Posterior vena cava (tissue), 2 donors: ENCODE measurements at regions of chr15 and their contacts with region 1.

Region 1: DNA sequence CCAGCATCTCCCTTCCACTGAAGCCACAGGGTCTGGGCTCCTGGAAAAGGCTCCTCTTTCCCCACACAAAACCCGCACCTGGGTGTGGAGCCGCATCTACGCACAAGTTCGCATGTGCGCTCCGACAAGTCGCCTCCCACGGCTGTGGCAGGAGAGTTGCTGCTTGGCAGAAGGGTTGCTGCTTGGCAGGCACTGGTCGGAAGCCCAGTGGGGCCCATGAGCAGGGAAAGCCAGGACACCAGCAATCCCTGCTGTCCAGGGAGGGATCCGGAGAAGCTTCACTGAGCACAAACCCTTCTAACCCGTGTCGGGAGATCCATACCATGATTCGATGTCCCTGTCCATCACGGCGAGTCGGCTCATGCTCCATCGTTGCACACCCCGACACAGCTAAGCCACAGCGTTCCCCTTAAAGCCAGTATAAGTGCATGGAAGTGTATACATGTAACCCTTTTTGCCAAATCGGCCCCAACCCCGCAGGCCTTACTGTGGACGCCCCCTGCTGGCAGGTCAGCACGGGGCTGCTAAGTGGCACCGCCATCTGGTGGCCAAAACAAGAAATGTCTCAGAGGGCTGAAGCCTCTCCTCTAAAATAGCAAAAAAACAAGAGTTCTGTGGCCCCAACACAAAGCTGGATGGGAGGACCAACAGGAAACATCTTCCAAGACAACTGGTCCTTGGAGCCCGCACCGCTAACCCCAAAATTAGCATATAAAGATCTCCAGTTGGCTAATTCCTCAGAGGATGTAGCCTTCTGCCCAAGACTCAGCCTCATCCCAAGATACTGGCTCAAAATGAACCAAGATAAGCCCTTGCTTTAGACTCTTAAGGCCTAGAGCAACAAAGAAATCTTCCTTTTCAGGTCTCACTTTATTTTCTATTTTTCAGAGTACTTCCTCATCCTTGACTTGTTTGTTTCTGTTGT is 8.3 kb downstream of the ANKRD63 start:
- DNase-seq: peak; percentile 93

Region 2: DNA sequence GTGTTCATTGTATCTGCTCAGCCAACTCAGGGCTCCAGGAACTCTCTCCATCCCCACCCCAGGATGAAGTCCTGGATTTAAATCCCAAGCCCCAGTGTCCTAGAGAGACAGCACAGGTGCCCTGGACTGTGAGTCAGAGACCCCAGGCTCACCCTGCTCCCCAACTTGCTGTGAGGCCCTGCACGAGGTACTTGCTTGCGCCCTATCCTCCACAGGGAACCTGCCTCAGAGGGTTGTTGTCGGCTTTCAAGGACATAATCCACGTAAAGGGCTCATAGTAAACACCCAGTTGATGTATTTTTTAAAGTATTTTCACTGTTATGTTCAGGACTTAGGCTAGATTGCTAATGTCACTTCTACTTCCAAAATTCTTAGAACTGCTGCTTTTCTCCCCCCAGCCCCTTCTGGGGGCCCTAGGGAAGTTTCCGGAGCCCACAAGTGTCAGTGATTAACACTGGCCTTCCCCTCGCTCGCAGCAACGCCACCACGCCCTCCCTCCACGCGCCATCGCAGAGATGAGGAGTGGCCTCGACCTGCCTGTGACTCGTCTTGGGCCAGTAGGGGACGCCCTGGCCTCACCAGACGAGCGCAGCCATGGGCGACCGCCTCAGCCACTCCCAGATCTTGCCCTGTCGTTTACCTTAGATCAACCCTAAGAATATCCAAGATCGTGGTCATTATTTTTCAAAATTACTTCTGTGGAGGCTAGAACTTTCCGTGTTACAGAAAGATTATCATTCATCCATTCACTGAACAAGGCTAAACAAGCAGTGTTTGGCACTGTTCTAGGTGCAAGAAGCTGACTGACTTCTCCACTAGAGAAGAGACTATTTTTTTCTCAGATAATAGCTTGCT is 229.7 kb before region 1 on chr15:
- intact Hi-C with region 1: loop called in 1 of 2 experiments (anchors 5 kb)
- DNase-seq: peak; percentile 97

Region 3: DNA sequence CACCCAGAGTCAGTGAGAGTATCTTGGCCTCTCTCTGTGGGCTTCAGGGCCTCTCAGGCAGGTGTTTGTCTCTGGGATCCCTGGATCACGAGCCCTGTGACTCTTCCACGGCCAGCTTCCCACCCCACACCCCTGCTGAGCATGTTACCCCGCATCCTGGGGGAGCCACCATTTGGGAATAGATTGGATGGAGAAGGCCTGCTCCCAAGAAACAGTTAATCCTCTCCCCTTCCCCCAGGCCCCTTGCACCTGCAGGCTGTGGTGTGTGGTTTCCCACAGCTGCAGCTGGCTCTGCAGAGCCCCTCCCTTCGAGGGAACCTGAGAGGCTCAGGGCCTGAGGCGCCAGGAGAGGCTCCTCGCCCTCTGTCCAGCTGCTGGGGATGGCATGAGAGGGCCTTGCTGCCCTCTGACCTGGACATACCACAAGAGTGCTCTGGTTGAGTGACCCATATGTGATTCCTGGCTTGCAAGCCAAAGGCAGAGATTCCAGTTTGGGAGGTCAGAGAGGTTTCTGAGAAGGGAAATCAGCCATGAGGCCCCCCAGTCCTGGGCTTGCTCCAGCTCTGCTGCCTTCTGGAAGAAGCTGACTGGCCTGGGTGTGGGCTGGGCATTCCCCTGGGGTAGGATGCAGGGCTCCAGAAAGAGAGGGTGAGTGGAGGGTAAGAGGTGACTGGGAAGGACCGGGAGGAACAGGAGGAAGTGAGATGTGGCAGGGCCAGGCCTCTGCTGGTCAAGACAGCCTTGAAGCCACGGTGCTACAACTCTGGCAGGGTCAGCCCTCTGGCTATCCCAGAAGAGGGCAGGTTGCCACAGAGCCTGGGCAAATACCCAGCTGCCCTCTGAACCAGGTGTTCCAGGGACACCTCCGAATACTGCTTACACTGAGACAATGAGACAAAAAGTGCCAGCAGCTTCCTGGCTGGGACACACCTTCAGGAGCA is 219.7 kb before region 1 on chr15:
- intact Hi-C with region 1: loop called in 1 of 2 experiments (anchors 5 kb)
- DNase-seq: peak; percentile 67

Region 4: GRCh38 chr15:40217159-40217824 is 57.3 kb before region 1 on chr15:
- intact Hi-C with region 1: loop called (anchors 2 to 5 kb)
- DNase-seq: no peak

Region 5: DNA sequence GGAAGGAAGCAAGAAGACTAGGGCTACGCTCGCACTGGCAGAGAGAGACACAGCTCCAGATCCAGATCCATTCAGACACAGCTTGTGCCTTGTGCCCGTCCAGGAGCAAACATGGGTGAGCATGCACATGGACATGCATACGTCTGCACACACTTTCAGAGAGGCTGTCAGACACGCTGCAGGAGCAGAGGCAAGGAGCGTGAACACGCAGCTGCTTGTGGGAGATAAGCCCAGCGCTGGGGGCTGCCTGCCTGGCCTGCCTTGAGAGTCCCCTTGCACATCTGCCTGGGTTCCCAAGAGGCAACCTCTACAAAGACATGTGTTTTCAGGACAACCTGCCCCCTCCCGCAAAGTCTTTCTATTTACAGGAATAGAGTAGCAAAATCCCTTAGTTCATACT is 152.6 kb after region 1 on chr15:
- intact Hi-C with region 1: loop called in 1 of 2 experiments (anchors 5 kb)
- DNase-seq: no peak

Region 6: GRCh38 chr15:40440743-40441564 is 166.3 kb after region 1 on chr15 and contains the start of gene BAHD1:
- intact Hi-C with region 1: no loop called
- DNase-seq: peak; percentile 99
- total RNA-seq, gene BAHD1: 11.9 to 13.8 TPM